ENCODE measurements at regions of chr19 and their contacts with region 1.

Region 1: GRCh38 chr19:10870955-10871603 is at the start of gene CARM1:
- DNase-seq: peak; percentile 100
- H3K4me3 ChIP-seq: peak within 1 kb of the TSS; percentile 70 to 98 (median 96)
- H3K27ac ChIP-seq: peak within 1 kb of the TSS; percentile 80 to 96 (median 91)
- H3K4me1 ChIP-seq: peaks cover 0 to 43% (median 29%) of the 10 kb centered on the region in 4 donors
- H3K27me3 ChIP-seq: no peaks in the 10 kb centered on the region
- CTCF ChIP-seq: peak in 1 of 4 experiments; percentile 41
- EP300 ChIP-seq: no peak
- POLR2A ChIP-seq: no peak
- total RNA-seq, gene CARM1: 18.1 to 24.9 (median 20.8) TPM

Region 2: DNA sequence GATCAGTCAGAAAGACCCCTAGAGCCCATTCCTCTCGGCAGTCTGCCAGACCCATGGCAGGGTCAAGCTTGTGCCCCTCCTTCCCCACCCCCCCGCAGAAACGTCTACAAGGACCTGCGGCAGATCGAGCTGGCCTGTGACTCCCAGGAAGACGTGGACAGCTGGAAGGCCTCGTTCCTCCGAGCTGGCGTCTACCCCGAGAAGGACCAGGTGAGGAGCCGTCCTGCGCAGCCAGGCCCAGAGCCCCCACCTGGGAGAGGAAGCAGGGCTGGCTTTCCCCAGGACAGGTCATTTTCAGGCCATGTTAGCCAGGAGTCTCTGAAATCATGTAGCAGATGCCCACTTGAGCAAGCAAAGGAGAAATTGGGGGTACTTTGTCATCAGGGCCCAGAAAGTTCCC is 47.4 kb before region 1 on chr19:
- intact Hi-C with region 1: no loop called
- DNase-seq: no peak
- H3K4me3 ChIP-seq: no peak overlapping the region
- H3K27ac ChIP-seq: no peak overlapping the region
- H3K4me1 ChIP-seq: no peaks in the 10 kb centered on the region
- H3K27me3 ChIP-seq: no peaks in the 10 kb centered on the region
- CTCF ChIP-seq: no peak
- EP300 ChIP-seq: no peak
- POLR2A ChIP-seq: no peak

Region 3: GRCh38 chr19:10835754-10836477 is 35.2 kb before region 1 on chr19 and contains the start of gene TMED1:
- intact Hi-C with region 1: loop called (anchors 2 kb)
- DNase-seq: peak; percentile 100
- H3K4me3 ChIP-seq: peak within 1 kb of the TSS; percentile 53 to 76 (median 62)
- H3K27ac ChIP-seq: peak within 1 kb of the TSS; percentile 95 to 99 (median 97)
- H3K4me1 ChIP-seq: peaks cover 0 to 11% (median 6%) of the 10 kb centered on the region in 4 donors
- H3K27me3 ChIP-seq: no peaks in the 10 kb centered on the region
- CTCF ChIP-seq: peak; percentile 25 to 65 (median 31)
- EP300 ChIP-seq: no peak
- POLR2A ChIP-seq: peak in 1 of 2 donors; percentile 37
- total RNA-seq, gene TMED1: 14.1 to 35.3 (median 28.9) TPM

Region 4: DNA sequence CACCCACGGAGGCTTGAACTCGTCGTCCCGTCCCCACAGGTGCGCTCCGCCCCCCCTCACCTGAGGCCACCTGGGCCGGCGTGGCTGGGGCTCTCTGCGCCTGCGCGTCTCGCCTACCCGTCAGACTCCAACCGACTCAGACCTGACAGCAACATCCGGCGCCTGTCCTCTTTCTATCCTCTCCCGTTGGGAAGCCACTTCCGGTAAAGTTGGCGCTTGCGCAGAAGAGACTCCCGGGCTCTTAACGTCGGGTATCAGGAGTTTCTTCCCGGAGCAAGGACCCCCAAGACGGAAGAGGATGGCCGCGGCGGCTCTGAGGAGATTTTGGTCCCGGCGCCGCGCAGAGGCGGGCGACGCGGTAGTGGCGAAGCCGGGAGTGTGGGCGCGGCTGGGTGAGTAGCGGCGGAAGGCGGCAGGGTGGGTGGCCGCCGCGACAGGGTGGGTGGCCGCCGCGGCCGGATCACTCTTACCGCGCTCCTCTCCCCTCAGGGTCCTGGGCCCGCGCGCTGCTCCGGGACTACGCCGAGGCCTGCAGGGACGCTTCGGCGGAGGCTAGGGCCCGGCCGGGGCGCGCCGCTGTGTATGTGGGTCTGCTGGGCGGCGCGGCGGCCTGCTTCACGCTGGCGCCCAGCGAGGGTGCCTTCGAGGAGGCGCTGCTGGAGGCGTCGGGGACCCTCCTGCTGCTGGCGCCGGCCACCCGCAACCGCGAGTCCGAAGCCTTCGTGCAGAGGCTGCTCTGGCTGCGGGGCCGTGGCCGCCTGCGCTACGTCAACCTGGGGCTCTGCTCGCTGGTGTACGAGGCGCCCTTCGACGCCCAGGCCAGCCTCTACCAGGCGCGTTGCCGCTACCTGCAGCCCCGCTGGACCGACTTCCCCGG is 57.7 kb after region 1 on chr19 and contains the starts of genes TIMM29 and YIPF2:
- intact Hi-C with region 1: loop called (anchors 2 kb)
- DNase-seq: peak; percentile 99
- H3K4me3 ChIP-seq: peak within 1 kb of the TSS; percentile 90 to 100 (median 98)
- H3K27ac ChIP-seq: peak within 1 kb of the TSS; percentile 88 to 92 (median 90)
- H3K4me1 ChIP-seq: peaks cover 0 to 38% (median 26%) of the 10 kb centered on the region in 4 donors
- H3K27me3 ChIP-seq: no peaks in the 10 kb centered on the region
- CTCF ChIP-seq: no peak
- EP300 ChIP-seq: no peak
- POLR2A ChIP-seq: peak; percentile 49 to 68
- total RNA-seq, gene TIMM29: 18.8 to 28.5 (median 26.0) TPM
- total RNA-seq, gene YIPF2: 26.5 to 36.0 (median 28.3) TPM